ENCODE measurements at regions of chr17 and their contacts with region 1.

Region 1: DNA sequence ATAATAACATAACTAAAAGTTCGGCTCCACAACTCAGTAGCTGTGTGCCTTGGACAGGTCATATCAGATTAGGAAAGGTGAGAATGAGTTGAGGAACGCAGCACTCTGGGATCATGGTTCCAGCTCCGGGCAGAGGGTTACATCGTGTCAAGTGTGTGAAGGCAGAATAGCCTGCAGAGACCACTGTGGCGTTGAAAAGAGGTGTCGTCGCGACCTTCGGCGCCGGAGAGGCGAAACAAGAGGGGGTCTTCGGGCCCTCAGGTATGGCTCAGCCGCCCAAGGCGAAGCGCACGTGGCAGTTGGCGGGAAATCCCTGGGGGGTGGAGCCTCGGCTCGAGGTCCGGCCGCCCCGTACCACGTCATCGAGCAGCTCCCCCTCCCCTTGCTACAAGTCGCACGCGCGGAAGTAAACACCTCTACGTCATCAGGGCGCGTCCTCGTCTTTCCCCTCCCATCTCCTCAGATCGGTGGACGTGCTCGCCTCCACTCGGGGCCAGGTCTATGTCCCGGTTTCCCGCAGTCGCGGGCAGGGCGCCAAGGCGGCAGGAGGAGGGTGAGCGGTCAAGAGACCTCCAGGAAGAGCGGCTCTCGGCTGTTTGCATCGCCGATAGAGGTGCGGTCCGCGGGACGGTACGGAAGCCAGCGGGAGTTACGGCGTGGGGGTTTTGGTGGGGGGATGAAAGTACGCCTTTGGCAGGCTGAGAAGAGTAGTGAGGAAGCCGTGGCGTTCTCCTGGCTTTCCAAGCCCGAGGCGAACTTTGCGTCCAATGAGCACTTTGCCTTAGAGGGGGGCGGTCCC is at the start of gene DHX40:
- DNase-seq: peak; percentile 91
- H3K4me3 Mint-ChIP-seq: peak within 1 kb of the TSS; percentile 99
- H3K27ac Mint-ChIP-seq: peak within 1 kb of the TSS; percentile 96
- H3K4me1 Mint-ChIP-seq: peaks cover 18% of the 10 kb centered on the region
- H3K27me3 Mint-ChIP-seq: no peaks in the 10 kb centered on the region
- total RNA-seq, gene DHX40: 16.7 and 18.2 TPM in 2 replicates

Region 2: DNA sequence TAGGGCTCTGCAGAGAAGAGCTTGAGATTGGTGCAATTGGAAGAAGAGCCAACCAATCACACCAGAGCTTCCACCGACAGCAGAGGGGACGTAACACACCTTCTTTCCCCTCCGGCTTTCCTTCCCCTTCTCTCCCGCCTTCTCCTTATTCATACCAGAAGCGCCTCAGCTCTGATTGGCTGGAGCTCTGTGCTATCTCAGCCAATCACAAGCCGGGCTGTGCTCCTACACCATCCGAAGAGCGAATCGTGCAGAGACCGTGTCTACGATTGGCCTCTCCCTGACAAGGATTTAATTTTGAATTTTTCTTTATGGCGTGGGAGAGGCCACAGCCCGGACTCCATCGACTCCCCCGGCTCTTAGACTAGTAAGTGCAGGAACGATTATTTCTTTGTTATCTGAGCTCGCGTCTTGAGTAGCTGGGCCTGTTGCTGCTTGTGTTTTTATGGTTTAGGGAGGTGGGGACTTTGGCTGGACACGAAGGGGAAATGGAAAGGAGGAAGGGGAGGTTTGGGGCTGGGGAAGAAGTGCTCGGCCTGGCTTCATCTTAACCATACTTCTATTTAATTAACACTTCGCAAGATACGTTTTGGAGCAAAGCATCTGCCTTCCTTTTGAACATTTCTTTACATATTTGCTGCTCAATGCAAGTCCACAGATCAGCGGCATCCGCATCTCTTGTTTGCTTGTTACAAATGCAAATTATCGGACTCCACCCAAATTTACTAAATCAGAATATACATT is 409.8 kb before region 1 on chr17 and contains the start of gene PRR11:
- intact Hi-C with region 1: loop called (anchors 5 kb)
- DNase-seq: peak; percentile 95
- H3K4me3 Mint-ChIP-seq: no peak within 1 kb of the TSS
- H3K27ac Mint-ChIP-seq: no peak within 1 kb of the TSS
- H3K4me1 Mint-ChIP-seq: peaks cover 51% of the 10 kb centered on the region
- H3K27me3 Mint-ChIP-seq: no peaks in the 10 kb centered on the region
- total RNA-seq, gene PRR11: 50.2 and 51.5 TPM in 2 replicates